ENCODE measurements at regions of chr1 and their contacts with region 1.

Region 1: GRCh38 chr1:176374967-176375569 is 87.9 kb upstream of the PAPPA2 start:
- DNase-seq: peak; percentile 46
- H3K4me3 ChIP-seq: no peak overlapping the region
- H3K27ac ChIP-seq: no peak overlapping the region
- H3K4me1 ChIP-seq: no peaks in the 10 kb centered on the region
- H3K27me3 ChIP-seq: no peaks in the 10 kb centered on the region
- CTCF ChIP-seq: peak; percentile 87 to 91

Region 2: DNA sequence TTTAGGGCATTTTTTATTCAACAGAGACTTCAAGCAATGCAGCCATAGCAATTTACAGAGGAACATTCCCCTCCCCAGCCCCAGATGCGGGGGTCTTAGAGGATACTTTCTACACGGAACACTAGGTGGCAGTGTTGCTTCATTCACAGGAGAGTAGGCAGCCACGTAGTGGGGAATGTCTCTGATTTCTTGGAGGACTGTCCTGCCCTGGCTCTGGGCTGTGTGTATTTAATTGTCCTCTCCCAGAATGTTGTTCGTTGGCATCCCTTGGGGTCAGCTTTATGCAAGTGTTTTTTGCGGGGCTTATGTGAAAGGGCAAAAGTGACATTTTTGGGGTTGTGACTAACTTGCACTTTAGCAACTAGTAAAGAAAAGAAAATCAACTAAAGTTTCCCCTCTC is 184.8 kb after region 1 on chr1:
- CTCF ChIA-PET with region 1: no interaction called
- dilution Hi-C with region 1: no loop called
- in situ Hi-C with region 1: no loop called
- intact Hi-C with region 1: loop called (anchors 1 kb)
- DNase-seq: peak; percentile 27
- H3K4me3 ChIP-seq: no peak overlapping the region
- H3K27ac ChIP-seq: no peak overlapping the region
- H3K4me1 ChIP-seq: peaks cover 5% of the 10 kb centered on the region
- H3K27me3 ChIP-seq: no peaks in the 10 kb centered on the region
- CTCF ChIP-seq: peak; percentile 66 to 93

Region 3: GRCh38 chr1:176691251-176692228 is 316.5 kb after region 1 on chr1:
- CTCF ChIA-PET with region 1: interaction called, 4 read pairs
- dilution Hi-C with region 1: no loop called
- in situ Hi-C with region 1: loop called (anchors 10 to 25 kb)
- intact Hi-C with region 1: loop called (anchors 1 kb)
- DNase-seq: peak; percentile 49
- H3K4me3 ChIP-seq: no peak overlapping the region
- H3K27ac ChIP-seq: no peak overlapping the region
- H3K4me1 ChIP-seq: peaks cover 1% of the 10 kb centered on the region
- H3K27me3 ChIP-seq: no peaks in the 10 kb centered on the region
- CTCF ChIP-seq: peak; percentile 82 to 85

Region 4: GRCh38 chr1:176795929-176796328 is 420.9 kb after region 1 on chr1:
- CTCF ChIA-PET with region 1: no interaction called
- dilution Hi-C with region 1: no loop called
- in situ Hi-C with region 1: no loop called
- intact Hi-C with region 1: no loop called
- DNase-seq: peak; percentile 3
- H3K4me3 ChIP-seq: no peak overlapping the region
- H3K27ac ChIP-seq: no peak overlapping the region
- H3K4me1 ChIP-seq: no peaks in the 10 kb centered on the region
- H3K27me3 ChIP-seq: peaks cover 3% of the 10 kb centered on the region
- CTCF ChIP-seq: no peak

Region 5: GRCh38 chr1:176843352-176844297 is 468.6 kb after region 1 on chr1:
- CTCF ChIA-PET with region 1: no interaction called
- dilution Hi-C with region 1: no loop called
- in situ Hi-C with region 1: loop called (anchors 25 kb)
- intact Hi-C with region 1: loop called (anchors 1 kb)
- DNase-seq: peak; percentile 12
- H3K4me3 ChIP-seq: no peak overlapping the region
- H3K27ac ChIP-seq: no peak overlapping the region
- H3K4me1 ChIP-seq: no peaks in the 10 kb centered on the region
- H3K27me3 ChIP-seq: peaks cover 5% of the 10 kb centered on the region
- CTCF ChIP-seq: peak; percentile 38 to 66